GM23248 (cell line): ENCODE measurements at regions of chr22 and their contacts with region 1.

Region 1: DNA sequence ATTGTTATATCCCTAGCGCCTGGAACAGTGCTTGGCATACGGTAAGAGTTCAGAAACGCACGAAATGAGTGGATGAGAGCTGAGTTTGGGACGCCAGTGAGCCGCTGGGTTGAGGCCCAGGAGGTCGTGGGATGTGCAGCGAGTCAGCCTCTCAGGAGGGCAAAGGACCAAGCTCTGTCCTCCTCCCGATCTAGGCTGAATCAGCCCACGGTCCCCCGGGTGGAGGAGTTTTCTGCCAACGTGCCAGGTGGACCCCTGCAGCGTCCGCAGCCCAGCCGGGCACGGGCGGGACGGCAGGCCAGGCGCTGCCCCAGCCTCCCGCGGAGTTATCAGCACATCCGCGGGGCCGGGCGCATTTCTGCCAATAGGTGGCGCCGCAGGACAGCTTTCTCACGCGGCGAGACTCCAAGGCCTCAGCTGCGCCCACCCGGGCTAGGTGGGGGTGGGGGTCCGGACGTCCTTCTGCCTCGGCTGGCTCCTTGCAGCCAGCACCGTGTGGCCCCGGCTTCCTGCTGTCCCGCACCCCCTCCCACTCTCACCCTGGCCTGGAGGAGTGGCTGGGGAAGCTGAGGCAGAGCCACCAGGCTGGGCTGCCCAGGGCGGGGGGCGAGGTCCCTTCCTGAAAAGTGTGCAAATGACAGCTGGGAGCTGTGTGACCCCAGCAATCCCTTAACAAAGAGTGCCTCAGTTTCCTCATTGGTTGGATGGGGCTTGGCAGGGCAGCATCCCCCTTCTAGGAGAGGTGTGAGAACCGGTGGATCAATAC is 2.2 kb upstream of the RPS19BP1 start:
- DNase-seq: peak; percentile 79
- H3K4me3 ChIP-seq: 0 out of 2 replicates have a peak overlapping the region, but pooled peaks have one; percentile 31
- H3K27ac ChIP-seq: no peak overlapping the region
- H3K4me1 ChIP-seq: peaks cover 15% of the 10 kb centered on the region
- H3K27me3 ChIP-seq: no peaks in the 10 kb centered on the region

Region 2: DNA sequence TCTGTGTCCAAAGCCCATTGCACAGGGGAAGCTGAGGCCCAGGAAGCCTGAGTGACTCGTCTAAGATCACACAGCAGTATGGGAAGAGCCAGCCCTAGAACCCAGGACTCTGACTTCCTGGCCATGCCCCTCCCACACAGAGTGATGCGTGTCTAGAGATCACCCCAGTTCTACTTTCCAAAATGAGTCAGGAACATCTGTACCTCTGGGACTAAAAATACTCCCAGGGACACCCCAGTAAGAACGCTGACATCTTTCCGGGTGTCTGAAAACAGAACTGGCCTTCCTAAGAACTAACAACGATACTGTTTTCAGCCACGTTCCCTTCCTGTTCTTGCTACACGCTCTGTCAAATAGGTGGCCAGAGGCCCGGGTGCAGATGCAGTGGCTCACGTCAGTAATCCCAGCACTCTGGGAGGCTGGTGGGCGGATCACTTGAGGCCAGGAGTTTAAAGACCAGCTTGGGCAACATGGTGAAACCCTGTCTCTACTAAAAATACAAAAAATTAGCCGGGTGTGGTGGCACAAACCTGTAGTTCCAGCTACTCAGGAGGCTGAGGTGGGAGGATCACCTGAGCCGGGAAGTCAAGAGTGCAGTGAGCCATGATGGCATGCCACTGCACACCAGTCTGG is 268.3 kb before region 1 on chr22:
- in situ Hi-C with region 1: no loop called
- DNase-seq: peak; percentile 43
- H3K4me3 ChIP-seq: no peak overlapping the region
- H3K27ac ChIP-seq: no peak overlapping the region
- H3K4me1 ChIP-seq: no peaks in the 10 kb centered on the region; the same call in 1 of the 2 replicates
- H3K27me3 ChIP-seq: no peaks in the 10 kb centered on the region

Region 3: GRCh38 chr22:40024201-40025061 is 489.7 kb after region 1 on chr22:
- in situ Hi-C with region 1: loop called (anchors 5 kb)
- DNase-seq: peak; percentile 86
- H3K4me3 ChIP-seq: no peak overlapping the region
- H3K27ac ChIP-seq: no peak overlapping the region
- H3K4me1 ChIP-seq: no peaks in the 10 kb centered on the region
- H3K27me3 ChIP-seq: no peaks in the 10 kb centered on the region